A673 (cell line): ENCODE measurements at regions of chr4 and their contacts with region 1.

Region 1: DNA sequence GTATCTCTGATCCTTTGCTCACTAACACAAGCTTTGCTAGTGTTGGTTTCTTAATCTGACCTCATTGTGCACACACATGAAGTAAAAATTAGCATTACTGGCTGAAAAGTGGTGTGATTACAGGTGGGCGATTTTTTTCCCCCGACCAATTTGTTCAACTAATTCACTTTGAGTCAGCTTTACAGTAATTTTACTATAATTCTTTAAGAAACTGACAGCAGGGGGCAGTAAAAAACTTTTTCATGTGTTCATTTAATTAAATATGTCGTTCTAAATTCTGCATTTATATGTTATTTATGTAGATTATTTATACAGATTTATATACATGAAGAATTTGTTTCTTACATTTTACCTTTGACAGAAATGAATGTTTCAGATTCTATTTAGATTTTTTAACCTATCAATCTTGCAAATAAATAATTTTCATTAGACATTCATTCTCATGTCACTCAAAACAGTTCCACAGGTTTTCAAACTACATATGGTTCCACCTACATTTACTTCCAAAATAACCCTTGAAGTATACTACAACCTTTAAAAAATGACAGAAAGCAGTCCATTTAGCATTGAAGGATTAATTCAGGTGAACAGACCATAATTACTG is 17.5 kb downstream of the PALLD start:
- DNase-seq: peak; percentile 67
- H3K4me3 ChIP-seq: no peak overlapping the region
- H3K27ac ChIP-seq: no peak overlapping the region
- H3K4me1 ChIP-seq: peaks cover 4% of the 10 kb centered on the region
- H3K27me3 ChIP-seq: no peaks in the 10 kb centered on the region
- CTCF ChIP-seq: peak; percentile 65

Region 2: GRCh38 chr4:168917138-168917779 is 402.9 kb after region 1 on chr4:
- CTCF ChIA-PET with region 1: interaction called, 5 read pairs
- POLR2A ChIA-PET with region 1: interaction called, 3 read pairs
- intact Hi-C with region 1: loop called (anchors 1 kb)
- DNase-seq: peak; percentile 72
- H3K4me3 ChIP-seq: no peak overlapping the region
- H3K27ac ChIP-seq: no peak overlapping the region
- H3K4me1 ChIP-seq: no peaks in the 10 kb centered on the region
- H3K27me3 ChIP-seq: no peaks in the 10 kb centered on the region
- CTCF ChIP-seq: peak; percentile 78

Region 3: DNA sequence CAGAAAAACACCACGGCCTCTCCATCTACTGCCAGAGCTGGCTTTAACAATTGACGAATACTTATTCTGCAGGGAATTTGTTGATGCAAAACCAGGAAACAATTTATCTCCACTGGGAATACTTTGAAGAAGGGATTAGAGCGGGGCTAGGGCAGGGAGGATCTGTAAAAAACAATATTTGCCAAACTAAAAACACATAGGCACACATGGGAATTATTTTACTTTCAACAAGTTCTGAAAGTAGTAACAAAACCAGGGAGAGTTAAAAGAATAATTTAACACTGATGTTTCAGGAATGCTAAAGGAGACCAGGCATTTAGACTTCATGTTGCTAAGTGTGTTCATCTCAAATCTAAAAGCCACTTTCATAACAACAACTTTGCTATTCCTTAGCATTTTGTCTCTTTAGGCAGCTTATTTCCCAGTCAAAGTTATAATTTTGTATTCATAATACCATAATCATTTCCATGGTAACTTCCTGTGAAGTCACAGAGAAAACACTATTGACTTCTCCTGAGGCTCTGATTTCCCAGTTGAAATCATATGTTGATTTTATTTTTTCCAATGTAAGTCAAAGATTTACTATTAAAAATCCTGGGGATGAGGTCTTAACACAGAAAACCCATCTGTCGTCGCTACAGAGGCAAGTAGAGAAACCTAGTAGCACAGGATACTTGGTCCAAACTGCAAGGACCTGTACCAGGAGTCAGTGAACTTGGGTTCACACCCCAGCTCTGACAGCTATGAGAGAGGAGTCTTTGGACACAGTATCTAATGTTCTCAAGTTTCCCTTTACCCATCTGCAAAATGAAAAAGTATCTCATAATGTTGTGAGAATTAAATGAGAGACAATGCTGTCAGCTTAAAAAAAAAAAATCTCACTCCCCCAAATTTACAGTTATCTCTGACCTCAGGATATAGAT is 687.1 kb after region 1 on chr4:
- CTCF ChIA-PET with region 1: no interaction called
- POLR2A ChIA-PET with region 1: no interaction called
- intact Hi-C with region 1: no loop called
- DNase-seq: peak; percentile 82
- H3K4me3 ChIP-seq: peak overlapping the region; percentile 20
- H3K27ac ChIP-seq: peak overlapping the region; percentile 76
- H3K4me1 ChIP-seq: peaks cover 46% of the 10 kb centered on the region
- H3K27me3 ChIP-seq: no peaks in the 10 kb centered on the region
- CTCF ChIP-seq: no peak

Region 4: GRCh38 chr4:169492438-169493163 is 978.2 kb after region 1 on chr4:
- CTCF ChIA-PET with region 1: no interaction called
- POLR2A ChIA-PET with region 1: no interaction called
- intact Hi-C with region 1: loop called (anchors 5 kb)
- DNase-seq: peak; percentile 62
- H3K4me3 ChIP-seq: no peak overlapping the region
- H3K27ac ChIP-seq: no peak overlapping the region
- H3K4me1 ChIP-seq: no peaks in the 10 kb centered on the region
- H3K27me3 ChIP-seq: no peaks in the 10 kb centered on the region
- CTCF ChIP-seq: peak; percentile 82